PC-3 (cell line): ENCODE measurements at regions of chr19 and their contacts with region 1.

Region 1: DNA sequence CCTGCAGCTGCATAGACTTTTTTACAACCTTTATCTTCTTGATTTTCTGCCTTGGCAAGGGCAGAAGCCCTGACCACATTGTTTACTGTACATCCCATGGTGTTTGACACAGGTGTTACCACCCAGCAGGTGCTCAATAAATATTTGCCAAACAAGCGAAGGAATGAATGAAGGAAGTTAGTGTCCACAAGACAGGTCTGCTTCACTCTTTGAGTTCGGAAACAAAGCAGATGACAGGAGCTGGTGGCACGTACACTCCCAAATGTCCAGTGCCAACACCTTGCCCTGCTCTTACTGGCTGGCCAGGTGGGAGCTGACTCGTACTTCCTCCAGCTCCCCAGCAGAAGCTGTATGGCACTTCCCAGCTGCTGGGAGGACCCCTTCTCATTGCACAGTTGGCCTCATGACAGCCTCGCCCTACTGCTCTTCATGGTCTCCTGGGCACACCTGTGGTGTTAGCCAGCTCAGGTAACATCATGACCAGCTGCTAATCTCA is 22.0 kb upstream of the MUC16 start:
- DNase-seq: peak; percentile 87
- ATAC-seq: peak; percentile 90
- H3K4me3 ChIP-seq: no peak overlapping the region
- H3K27ac ChIP-seq: peak overlapping the region; percentile 36
- H3K4me1 ChIP-seq: peaks cover 10% of the 10 kb centered on the region
- H3K27me3 ChIP-seq: no peaks in the 10 kb centered on the region
- CTCF ChIP-seq: no peak

Region 2: DNA sequence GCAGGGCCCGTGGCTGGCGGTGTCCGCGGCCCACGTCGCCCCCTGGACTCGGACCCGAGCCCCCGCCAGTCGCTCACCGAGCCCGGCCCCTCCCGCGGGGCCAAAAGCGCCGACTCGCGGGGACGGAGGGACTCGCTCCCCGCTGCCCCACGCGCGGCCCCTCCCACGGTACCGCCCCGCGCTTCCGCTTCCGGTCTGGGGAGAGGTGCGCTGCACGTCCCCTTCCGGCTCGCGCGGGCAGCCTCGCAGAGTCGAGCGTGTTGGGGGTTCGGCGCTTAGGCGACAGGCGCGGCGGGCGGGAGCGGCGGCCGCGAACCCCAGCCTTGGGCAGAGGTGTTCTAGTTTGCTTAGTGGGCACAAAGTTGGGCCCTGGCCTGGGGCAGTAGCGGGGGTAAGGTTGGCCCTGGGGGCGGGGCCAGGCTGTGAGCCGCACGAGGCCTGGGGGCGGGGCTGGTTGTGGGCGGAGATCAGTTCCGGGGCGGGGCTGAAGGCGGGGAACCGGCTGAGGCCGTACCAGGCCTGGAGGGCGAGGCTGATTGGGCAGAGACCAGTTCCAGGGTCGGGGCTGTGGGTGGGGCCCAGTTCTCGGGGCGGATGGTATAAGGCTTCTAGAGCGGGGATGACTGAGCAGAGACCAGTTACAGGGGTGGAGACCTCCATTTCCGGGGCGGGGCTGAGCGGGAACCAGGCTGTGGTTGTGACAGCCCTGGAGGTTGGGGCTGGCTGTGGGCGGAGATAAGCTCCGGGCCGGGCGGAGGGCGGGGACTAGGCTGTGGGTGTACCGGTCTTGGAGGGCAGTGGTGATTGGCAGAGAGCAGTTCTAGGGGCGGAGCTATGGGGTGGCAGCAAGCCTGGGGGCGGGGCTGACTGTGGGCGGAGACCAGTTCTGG is 199.8 kb before region 1 on chr19 and contains the starts of genes MBD3L1 and ZNF558:
- CTCF ChIA-PET with region 1: no interaction called
- POLR2A ChIA-PET with region 1: no interaction called
- intact Hi-C with region 1: loop called (anchors 1 kb)
- DNase-seq: peak; percentile 98
- ATAC-seq: peak; percentile 87
- H3K4me3 ChIP-seq: peak within 1 kb of the TSS; percentile 87
- H3K27ac ChIP-seq: peak within 1 kb of the TSS; percentile 83
- H3K4me1 ChIP-seq: peaks cover 9% of the 10 kb centered on the region
- H3K27me3 ChIP-seq: peaks cover 11% of the 10 kb centered on the region
- CTCF ChIP-seq: peak; percentile 56
- total RNA-seq, gene MBD3L1: not detected in 2 replicates
- total RNA-seq, gene ZNF558: 32.4 and 36.5 TPM in 2 replicates

Region 3: DNA sequence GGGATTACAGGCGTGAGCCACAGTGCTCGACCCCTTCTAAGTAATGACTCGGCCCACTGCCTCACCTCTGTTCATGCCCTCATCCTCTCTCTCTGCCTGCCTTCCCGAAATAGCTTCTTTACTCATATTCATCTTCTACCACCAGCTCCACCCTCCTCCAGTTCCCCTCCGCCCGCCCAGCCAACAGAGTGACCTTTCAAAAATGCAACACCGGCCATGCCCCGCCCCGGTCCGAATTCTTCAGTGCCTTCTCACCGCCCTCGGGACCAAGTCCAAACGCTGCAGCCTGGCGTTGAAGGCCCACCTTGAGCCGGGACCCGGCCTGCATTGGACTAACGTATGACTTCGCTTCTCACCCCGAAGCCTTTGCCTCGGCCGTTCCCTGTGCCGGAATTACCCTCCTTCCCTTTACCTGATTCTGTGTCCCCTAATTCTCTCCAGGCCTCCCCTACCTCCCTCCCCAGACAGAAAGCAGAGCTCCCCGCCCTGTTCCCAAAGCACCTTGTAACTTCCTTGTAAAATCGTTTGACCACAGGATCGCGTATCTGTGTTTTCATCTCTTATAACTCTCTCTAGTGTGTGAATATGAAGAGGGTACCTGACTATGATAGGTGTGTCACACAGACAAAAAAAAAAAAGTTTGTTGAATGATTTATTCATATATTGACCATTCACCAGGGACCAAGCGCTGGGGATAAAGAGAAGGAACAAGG is 13.9 kb before region 1 on chr19:
- CTCF ChIA-PET with region 1: no interaction called
- POLR2A ChIA-PET with region 1: interaction called, 6 read pairs
- intact Hi-C with region 1: loop called (anchors 1 kb)
- DNase-seq: peak; percentile 96
- ATAC-seq: peak; percentile 87
- H3K4me3 ChIP-seq: peak overlapping the region; percentile 59
- H3K27ac ChIP-seq: peak overlapping the region; percentile 98
- H3K4me1 ChIP-seq: peaks cover 19% of the 10 kb centered on the region
- H3K27me3 ChIP-seq: no peaks in the 10 kb centered on the region
- CTCF ChIP-seq: no peak

Region 4: DNA sequence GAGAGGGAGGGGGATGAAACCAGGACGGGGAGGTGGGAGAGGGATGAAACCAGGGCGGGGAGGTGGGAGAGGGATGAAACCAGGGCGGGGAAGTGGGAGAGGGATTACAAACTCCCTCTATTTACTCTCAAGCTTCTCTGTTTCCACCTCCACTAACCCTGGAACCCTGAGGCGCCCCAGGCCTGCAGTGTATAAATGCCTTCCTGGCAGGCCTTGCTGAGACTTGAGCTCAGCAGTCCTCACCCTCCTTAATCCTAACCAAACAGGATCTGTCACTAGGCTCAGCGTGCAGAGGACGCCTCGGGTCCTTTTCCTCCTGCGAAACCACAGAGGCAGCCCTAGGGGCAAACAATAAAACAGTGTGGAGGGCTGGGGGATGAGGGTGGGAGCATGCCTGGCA is 22.6 kb after region 1 on chr19:
- CTCF ChIA-PET with region 1: no interaction called
- POLR2A ChIA-PET with region 1: no interaction called
- intact Hi-C with region 1: loop called (anchors 1 kb)
- DNase-seq: peak; percentile 95
- ATAC-seq: peak; percentile 85
- H3K4me3 ChIP-seq: peak overlapping the region; percentile 42; the same call in 1 of the 2 replicates
- H3K27ac ChIP-seq: peak overlapping the region; percentile 94
- H3K4me1 ChIP-seq: peaks cover 31% of the 10 kb centered on the region
- H3K27me3 ChIP-seq: no peaks in the 10 kb centered on the region
- CTCF ChIP-seq: no peak